Esophagus squamous epithelium (tissue), 5 donors: ENCODE measurements at regions of chr10 and their contacts with region 1.

Region 1: DNA sequence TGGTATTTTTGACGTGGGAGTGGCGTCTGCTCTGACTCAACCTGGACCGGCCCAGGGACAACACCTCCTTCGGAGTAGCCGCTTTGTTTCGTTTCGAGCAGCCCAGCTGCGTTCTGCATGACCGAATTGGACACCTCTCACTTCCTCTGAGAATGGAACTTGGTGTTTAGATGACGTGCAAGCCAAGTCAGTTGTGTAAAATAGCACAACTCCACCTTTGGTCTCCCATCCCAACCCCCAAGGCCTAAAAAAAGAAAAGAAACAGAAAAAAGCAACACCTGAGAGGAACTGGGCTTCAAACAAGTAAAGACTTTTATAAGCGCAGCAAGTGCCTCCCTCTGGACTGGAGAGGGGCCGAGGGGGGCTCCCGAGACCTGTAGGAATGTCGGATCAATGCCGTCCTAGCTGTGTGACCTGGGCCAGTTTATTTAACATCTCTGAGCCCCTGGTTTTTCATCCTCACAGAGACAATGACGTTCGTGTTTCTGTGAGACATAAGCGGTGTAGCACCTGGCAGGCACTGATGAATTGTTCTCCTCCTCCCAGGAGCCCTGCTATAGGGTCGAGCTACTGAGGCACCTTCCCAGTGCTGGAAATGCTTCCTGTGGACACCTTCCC is 52.0 kb upstream of the SMNDC1 start:
- DNase-seq: peak; percentile 23
- H3K4me3 ChIP-seq: peak overlapping the region in 3 of 4 donors; percentile 5 to 26 (median 11)
- H3K27ac ChIP-seq: peak overlapping the region; percentile 67 to 87 (median 78)
- H3K4me1 ChIP-seq: peaks cover 12 to 77% (median 28%) of the 10 kb centered on the region in 3 donors
- H3K27me3 ChIP-seq: no peaks in the 10 kb centered on the region
- CTCF ChIP-seq: no peak
- POLR2A ChIP-seq: no peak

Region 2: GRCh38 chr10:110304780-110305421 is 51.8 kb before region 1 on chr10 and contains the start of gene SMNDC1:
- intact Hi-C with region 1: loop called (anchors 5 kb)
- DNase-seq: peak; percentile 81
- H3K4me3 ChIP-seq: peak within 1 kb of the TSS; percentile 83 to 99 (median 91)
- H3K27ac ChIP-seq: peak within 1 kb of the TSS; percentile 96 to 98 (median 98)
- H3K4me1 ChIP-seq: peaks cover 13 to 52% (median 33%) of the 10 kb centered on the region in 3 donors
- H3K27me3 ChIP-seq: no peaks in the 10 kb centered on the region
- CTCF ChIP-seq: peak in 1 of 6 experiments; percentile 22
- POLR2A ChIP-seq: peak in 2 of 4 donors; percentile 40 to 79
- total RNA-seq, gene SMNDC1: 9.5 to 13.9 (median 10.9) TPM

Region 3: DNA sequence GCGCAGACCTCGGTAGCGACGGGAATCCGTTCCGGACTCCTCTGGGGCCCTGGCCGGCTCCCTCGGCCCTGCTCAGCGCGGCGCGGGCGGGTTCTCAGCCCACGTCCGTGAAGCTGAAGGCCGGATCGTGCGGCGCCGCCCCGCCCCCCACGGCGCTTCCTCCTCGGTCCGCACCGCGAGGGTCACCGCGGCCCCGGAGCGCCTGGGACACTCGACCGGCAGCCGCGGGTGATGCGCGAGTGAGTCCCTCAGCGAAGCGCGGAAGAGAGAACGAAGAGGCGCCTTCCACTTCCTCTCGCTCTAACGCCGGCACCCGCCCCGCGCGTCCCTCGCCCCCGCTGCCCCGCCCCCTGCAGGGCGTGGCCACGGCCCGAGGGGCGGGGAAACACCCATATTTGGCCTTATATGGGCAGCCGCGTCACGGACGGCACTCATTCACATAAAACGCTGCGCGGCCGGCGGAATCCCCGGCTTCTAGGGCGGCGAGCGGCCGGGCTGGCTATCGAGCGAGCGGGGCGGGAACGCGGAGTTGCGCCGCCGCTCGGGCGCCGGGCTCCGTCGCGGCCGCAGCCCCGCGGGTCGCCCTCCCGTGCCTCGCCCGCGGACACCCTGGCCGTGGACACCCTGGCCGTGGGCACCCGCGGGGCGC is 140.8 kb after region 1 on chr10 and contains the start of gene DUSP5:
- intact Hi-C with region 1: loop called (anchors 5 kb)
- DNase-seq: peak; percentile 84
- H3K4me3 ChIP-seq: peak within 1 kb of the TSS; percentile 59 to 78 (median 70)
- H3K27ac ChIP-seq: peak within 1 kb of the TSS; percentile 84 to 94 (median 91)
- H3K4me1 ChIP-seq: peaks cover 33 to 64% (median 47%) of the 10 kb centered on the region in 3 donors
- H3K27me3 ChIP-seq: peaks cover 0 to 9% (median 0%) of the 10 kb centered on the region in 4 donors
- CTCF ChIP-seq: peak in 1 of 6 experiments; percentile 26
- POLR2A ChIP-seq: peak in 3 of 4 donors; percentile 91 to 96 (median 96)
- total RNA-seq, gene DUSP5: 15.0 to 60.6 (median 47.9) TPM